ENCODE measurements at regions of chr1 and their contacts with region 1.

Region 1: GRCh38 chr1:229539863-229540506 is 18.5 kb downstream of the ABCB10 start:
- DNase-seq: no peak

Region 2: DNA sequence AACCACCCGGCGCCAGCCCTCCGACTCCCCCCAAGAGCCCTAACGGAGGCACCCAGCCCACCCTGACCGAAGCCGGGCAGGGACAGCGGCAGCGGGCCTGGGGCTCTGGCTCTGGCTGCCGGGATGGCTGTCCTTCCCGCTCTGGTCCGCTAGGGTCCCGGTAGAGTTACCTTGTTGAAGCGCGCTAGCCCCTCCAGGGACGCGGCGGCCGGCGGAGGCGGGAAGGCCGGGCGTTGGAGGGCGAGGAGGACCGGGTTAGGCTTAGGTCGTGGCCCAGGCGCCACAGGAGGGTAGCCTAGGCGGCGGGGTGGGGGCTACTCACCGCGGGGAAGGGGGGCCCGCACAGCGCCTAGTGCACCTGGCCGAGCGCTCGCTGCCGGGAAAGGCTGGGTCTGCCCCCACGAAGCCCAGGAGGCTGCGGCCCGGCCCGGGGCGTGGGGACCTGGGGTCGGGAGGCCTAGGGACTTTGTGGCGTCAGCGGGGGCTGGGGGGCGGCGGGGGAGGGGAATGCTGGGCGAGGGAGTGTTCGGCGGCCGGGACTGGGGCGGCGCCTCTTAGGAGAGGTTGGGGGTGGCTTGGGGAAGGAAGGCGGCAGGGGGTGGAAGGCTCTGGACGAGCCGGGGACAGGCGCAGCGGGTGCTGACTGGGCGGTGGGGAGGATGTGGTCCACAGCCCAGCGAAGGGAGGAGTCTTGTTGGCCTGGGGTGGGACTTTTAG is 1123.6 kb before region 1 on chr1 and contains the start of gene TRIM17:
- intact Hi-C with region 1: loop called in 1 of 2 experiments (anchors 5 kb)
- DNase-seq: peak; percentile 79
- total RNA-seq, gene TRIM17: 0.38 to 1.9 TPM

Measured in posterior vena cava (tissue), 2 donors.